ENCODE measurements at regions of chr9 and their contacts with region 1.

Region 1: DNA sequence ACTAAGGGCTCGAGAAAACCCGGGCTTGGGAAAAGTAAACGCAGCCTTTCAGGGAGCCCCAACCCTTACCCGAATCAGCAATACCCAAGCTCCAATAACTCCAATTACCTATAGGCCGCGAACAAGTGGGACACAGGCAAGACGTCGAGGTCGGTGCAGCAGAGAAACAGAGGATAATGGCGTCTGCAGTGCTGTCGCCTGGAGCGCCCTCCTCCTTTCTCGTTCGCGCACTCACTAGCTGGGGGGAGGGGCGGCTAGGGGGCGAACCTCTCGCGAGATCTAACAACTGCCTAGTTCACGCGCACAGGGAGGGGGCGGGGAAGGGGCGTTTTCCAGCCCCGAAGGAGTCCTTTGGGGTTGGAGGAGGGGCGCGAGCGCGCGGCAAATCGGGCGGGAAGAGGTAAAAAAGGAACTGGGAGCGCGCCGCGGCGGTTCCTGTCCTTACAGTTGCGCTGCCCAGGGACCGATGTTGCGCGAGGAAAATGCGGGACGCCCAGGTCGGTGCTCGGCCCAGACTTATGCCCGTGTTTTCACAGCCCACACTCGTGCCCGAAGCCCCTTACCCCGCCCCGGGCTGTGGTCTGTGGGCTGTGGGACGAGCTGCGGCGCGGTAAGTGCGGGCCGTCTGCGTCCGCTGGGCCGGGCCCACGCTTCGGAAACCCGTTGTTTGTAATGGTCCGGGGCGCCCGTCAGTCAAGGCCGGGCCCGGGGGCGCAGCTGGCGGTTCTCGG is at the start of gene RMI1:
- DNase-seq: peak; percentile 97 to 99 (median 98)
- H3K4me3 ChIP-seq: peak within 1 kb of the TSS; percentile 72 to 100 (median 88)
- H3K4me3 Mint-ChIP-seq: peak within 1 kb of the TSS; percentile 99 to 100
- H3K27ac ChIP-seq: peak within 1 kb of the TSS; percentile 97 to 99
- H3K27ac Mint-ChIP-seq: peak within 1 kb of the TSS; percentile 99 to 100 (median 99)
- H3K4me1 ChIP-seq: peaks cover 17 to 49% of the 10 kb centered on the region in 2 donors
- H3K4me1 Mint-ChIP-seq: peaks cover 37% of the 10 kb centered on the region
- H3K27me3 ChIP-seq: no peaks in the 10 kb centered on the region
- H3K27me3 Mint-ChIP-seq: no peaks in the 10 kb centered on the region
- CTCF ChIP-seq: no peak
- polyA plus RNA-seq, gene RMI1: 1.7 to 11.5 (median 5.3) TPM

Region 2: DNA sequence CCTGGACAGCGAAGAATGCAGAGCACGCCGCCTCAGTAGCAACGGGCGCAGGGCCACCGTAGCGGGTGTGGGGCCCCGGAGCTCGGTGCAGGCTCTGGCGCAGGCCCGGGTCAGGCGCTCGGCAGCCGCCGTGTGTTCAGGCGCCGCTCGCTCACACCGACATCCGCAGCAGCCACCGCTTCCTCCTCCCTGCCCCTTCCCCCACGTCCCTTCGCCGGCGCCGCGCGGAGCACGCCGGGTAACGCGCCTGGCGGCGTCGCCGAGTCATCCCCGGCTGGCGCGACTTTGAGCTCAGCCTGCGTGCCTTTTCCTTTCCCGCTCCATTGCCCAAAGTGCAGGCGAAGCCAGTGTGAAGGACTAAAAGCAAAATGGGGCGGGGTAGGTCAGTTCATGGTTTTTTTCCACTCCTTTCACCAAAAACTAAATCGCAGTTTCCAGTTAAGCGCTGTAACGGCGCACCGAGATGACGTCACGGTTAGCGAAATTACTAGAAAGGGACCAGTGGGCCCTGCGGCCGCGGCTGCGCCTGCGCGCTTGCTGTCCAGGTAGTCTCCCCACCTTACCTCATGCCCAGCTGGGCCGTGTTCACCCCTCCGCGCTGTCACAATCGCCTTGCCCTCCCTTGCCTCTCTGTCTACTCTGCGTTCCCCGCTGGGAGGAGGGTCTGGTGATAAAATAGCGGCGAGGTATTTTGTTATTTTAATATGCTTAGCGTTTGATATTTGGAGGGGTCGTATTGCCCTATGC is 272.6 kb before region 1 on chr9 and contains the start of gene UBQLN1:
- intact Hi-C with region 1: loop called in 1 of 2 experiments (anchors 10 kb)
- DNase-seq: peak; percentile 90 to 92 (median 92)
- H3K4me3 ChIP-seq: peak within 1 kb of the TSS; percentile 49 to 96 (median 90)
- H3K4me3 Mint-ChIP-seq: peak within 1 kb of the TSS; percentile 96 to 98
- H3K27ac ChIP-seq: peak within 1 kb of the TSS; percentile 99 to 100
- H3K27ac Mint-ChIP-seq: peak within 1 kb of the TSS; percentile 100
- H3K4me1 ChIP-seq: peaks cover 15 to 26% of the 10 kb centered on the region in 2 donors
- H3K4me1 Mint-ChIP-seq: peaks cover 30% of the 10 kb centered on the region
- H3K27me3 ChIP-seq: no peaks in the 10 kb centered on the region
- H3K27me3 Mint-ChIP-seq: peaks cover 0 to 1% (median 0%) of the 10 kb centered on the region in 3 donors
- CTCF ChIP-seq: no peak
- polyA plus RNA-seq, gene UBQLN1: 45.9 to 52.9 (median 46.9) TPM

Region 3: GRCh38 chr9:83920927-83921707 is 59.4 kb before region 1 on chr9 and contains the start of gene KIF27:
- intact Hi-C with region 1: loop called (anchors 2 to 5 kb)
- DNase-seq: peak; percentile 96 to 99 (median 98)
- H3K4me3 ChIP-seq: peak within 1 kb of the TSS; percentile 44 to 74 (median 60)
- H3K4me3 Mint-ChIP-seq: peak within 1 kb of the TSS; percentile 83 to 89
- H3K27ac ChIP-seq: peak within 1 kb of the TSS; percentile 77 to 85
- H3K27ac Mint-ChIP-seq: peak within 1 kb of the TSS; percentile 92 to 97 (median 95)
- H3K4me1 ChIP-seq: peaks cover 15 to 20% of the 10 kb centered on the region in 2 donors
- H3K4me1 Mint-ChIP-seq: peaks cover 12% of the 10 kb centered on the region
- H3K27me3 ChIP-seq: no peaks in the 10 kb centered on the region
- H3K27me3 Mint-ChIP-seq: peaks cover 0 to 4% (median 0%) of the 10 kb centered on the region in 3 donors
- CTCF ChIP-seq: peak; percentile 72
- polyA plus RNA-seq, gene KIF27: 0.58 to 1.3 (median 1.1) TPM

Measured in CD14-positive monocyte (primary cell).